ENCODE measurements at regions of chr3 and their contacts with region 1.

Region 1: DNA sequence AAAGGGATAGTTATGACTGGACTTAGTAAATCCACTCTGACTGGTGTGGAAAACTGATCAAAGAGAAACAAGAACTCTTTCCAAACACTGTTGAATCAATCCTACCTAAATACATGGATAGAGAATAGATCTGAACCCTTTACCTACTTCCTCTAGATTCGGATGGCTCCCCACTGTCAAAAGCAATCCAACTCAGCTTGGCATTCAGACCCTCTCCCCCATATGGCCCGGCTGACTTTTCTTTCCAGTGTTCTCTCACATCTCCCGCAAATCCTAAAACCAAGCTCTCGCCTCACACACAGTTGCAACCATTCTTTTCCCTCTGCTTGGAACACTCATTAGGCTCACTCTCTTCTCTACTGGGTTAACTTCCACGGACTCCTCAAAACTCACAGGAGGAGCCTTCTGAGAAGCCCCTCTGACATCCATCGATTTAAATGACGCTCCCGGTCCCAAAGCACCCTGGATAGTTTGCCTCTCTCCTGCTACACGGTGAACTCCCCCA is 639 bp downstream of the SPICE1 start:
- DNase-seq: peak; percentile 1
- ATAC-seq: peak; percentile 41
- H3K4me3 ChIP-seq: peak overlapping the region; percentile 66 to 86 (median 75)
- H3K27ac ChIP-seq: peak overlapping the region; percentile 78
- H3K4me1 ChIP-seq: peaks cover 28% of the 10 kb centered on the region
- H3K27me3 ChIP-seq: no peaks in the 10 kb centered on the region; a peak in 2 of 5 replicates
- CTCF ChIP-seq: no peak
- EP300 ChIP-seq: no peak
- POLR2A ChIP-seq: no peak
- RAD21 ChIP-seq: no peak

Region 2: GRCh38 chr3:113531826-113532697 is 17.7 kb after region 1 on chr3 and contains the start of gene SIDT1:
- CTCF ChIA-PET with region 1: no interaction called
- POLR2A ChIA-PET with region 1: no interaction called
- in situ Hi-C with region 1: no loop called
- intact Hi-C with region 1: loop called (anchors 2 kb)
- DNase-seq: no peak
- ATAC-seq: peak; percentile 72
- H3K4me3 ChIP-seq: peak within 1 kb of the TSS; percentile 50 to 72 (median 61)
- H3K27ac ChIP-seq: no peak within 1 kb of the TSS
- H3K4me1 ChIP-seq: peaks cover 16% of the 10 kb centered on the region
- H3K27me3 ChIP-seq: peaks cover 1 to 44% of the 10 kb centered on the region in 2 experiments; a peak in 3 of 5 replicates
- CTCF ChIP-seq: no peak
- EP300 ChIP-seq: no peak
- POLR2A ChIP-seq: no peak
- RAD21 ChIP-seq: no peak
- total RNA-seq, gene SIDT1: 0.07 TPM in 1 of 2 replicates, not detected in the other

Region 3: DNA sequence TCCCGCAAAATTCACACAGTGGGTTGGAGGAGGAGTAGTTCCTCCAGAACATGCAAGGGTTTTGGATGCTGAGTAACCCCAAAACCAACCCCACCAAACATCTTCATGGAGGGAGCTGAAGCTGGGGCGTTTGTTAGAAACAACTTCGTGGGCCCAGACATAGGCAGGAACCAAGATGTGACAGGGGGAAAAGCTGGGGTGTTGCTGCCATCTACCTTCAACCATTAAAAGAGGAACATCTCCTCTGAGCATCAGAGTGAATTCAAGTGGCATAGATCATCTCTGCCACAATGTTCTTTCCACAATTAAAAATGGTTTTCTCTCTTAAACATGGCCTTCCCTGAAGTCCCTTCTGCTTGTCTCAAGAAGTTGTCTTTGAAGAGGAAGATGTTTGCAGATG is 38.5 kb after region 1 on chr3:
- CTCF ChIA-PET with region 1: no interaction called
- POLR2A ChIA-PET with region 1: interaction called, 19 read pairs
- in situ Hi-C with region 1: no loop called
- intact Hi-C with region 1: no loop called
- DNase-seq: no peak
- ATAC-seq: peak; percentile 53
- H3K4me3 ChIP-seq: no peak overlapping the region
- H3K27ac ChIP-seq: no peak overlapping the region
- H3K4me1 ChIP-seq: peaks cover 63% of the 10 kb centered on the region
- H3K27me3 ChIP-seq: no peaks in the 10 kb centered on the region; a peak in 1 of 5 replicates
- CTCF ChIP-seq: peak; percentile 59
- EP300 ChIP-seq: no peak
- POLR2A ChIP-seq: no peak
- RAD21 ChIP-seq: 0 out of 2 replicates have a peak, but pooled peaks have one; percentile 20

Region 4: DNA sequence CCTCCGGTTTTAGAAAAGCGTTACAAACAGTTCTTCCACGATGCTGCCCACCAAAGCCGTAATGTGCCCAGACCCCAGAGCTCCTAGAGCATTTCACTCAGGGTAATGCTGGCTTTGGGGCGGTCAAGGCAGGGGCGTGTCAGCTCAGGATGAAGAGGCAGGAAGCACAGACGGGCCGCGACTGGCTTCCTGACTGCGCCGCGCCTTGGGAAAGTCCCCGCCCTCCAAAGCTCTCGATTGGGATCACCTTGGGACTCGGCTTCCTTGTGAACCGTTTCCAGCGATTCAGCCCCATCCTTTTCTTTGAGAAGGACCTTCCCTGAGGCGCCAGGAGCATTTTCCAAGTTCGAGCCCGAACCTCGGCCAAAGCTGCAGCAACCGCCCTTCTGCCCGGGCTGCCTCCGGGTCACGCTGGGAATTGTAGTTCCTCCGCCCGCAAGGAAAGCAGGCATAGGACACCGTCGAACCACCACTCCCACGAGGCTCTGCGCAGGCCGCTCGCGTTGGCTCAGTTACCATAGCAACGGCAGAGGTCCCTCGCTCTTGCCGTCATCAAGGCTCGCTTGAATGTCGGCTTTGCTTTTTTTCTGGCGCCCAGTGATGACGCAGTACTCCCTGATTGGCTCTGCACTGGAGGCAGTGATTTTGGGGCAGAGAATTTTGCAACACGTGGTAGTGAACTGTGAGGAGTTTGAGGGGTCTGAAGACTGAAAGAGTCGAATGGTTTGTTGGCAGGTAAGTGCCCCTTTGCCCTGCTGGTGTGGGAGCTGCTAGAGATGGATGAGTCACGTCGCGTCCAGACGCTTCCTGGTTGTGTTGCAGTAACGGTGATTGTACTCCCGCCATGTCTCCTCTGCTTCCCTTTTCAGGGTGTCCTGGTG is 542.1 kb after region 1 on chr3 and contains the starts of genes CCDC191 and QTRT2:
- CTCF ChIA-PET with region 1: no interaction called
- POLR2A ChIA-PET with region 1: no interaction called
- in situ Hi-C with region 1: no loop called
- intact Hi-C with region 1: loop called (anchors 10 kb)
- DNase-seq: peak; percentile 98
- ATAC-seq: peak; percentile 99
- H3K4me3 ChIP-seq: peak within 1 kb of the TSS; percentile 83 to 93 (median 84)
- H3K27ac ChIP-seq: peak within 1 kb of the TSS; percentile 73
- H3K4me1 ChIP-seq: peaks cover 24% of the 10 kb centered on the region
- H3K27me3 ChIP-seq: no peaks in the 10 kb centered on the region; a peak in 1 of 5 replicates
- CTCF ChIP-seq: 0 out of 2 replicates have a peak, but pooled peaks have one; percentile 6
- EP300 ChIP-seq: peak in 1 of 2 experiments; percentile 37; a peak in 2 of 4 replicates
- POLR2A ChIP-seq: peak; percentile 74 to 76
- RAD21 ChIP-seq: no peak
- total RNA-seq, gene CCDC191: 1.2 and 1.4 TPM in 2 replicates
- total RNA-seq, gene QTRT2: 33.4 and 38.0 TPM in 2 replicates